T-cell (primary cell): ENCODE measurements at regions of chr15 and their contacts with region 1.

Region 1: DNA sequence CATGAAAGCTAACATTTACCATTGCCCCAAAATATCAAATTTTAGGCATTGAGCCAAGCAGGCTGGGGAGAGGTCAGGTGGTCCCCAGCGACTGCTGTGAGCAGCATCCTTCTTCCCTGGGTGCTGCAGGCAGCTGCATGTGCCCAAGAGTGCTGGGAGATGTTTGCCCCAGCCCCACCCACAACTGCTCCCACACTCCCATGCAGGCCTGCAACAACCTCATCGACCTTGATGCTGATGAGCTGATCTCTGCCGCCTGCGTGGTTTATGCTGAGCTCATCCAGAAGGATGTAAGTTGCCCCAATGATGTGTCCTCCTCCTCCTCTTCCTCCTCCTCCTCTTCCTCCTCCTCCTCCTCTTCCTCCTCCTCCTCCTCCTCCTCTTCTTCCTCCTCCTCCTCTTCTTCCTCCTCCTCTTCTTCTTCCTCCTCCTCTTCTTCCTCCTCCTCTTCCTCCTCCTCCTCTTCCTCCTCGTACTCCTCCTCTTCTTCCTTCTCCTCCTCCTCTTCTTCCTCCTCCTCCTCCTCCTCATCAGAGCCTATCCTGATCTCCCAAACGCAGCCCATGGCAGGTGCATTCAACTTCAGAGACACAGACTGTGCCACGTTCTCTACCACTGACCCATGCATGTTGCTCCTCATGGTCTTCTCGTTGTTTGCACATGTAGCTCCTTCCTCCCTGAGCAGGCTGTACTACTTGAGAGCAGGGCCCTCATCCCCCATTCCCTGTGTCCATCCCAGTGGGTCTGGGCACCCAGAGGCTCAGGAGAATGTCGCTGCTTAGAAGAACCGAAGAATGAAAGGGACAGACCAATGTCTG is 15.1 kb downstream of the TBC1D21 start:
- DNase-seq: no peak
- ATAC-seq: no peak
- H3K4me3 ChIP-seq: no peak overlapping the region
- H3K4me3 Mint-ChIP-seq: no peak overlapping the region
- H3K27ac ChIP-seq: no peak overlapping the region
- H3K27ac Mint-ChIP-seq: no peak overlapping the region
- H3K4me1 ChIP-seq: no peaks in the 10 kb centered on the region
- H3K4me1 Mint-ChIP-seq: no peaks in the 10 kb centered on the region
- H3K27me3 ChIP-seq: peaks cover 0 to 44% of the 10 kb centered on the region in 2 experiments
- H3K27me3 Mint-ChIP-seq: peaks cover 12 to 23% of the 10 kb centered on the region in 2 donors

Region 2: GRCh38 chr15:73838831-73839426 is 49.5 kb before region 1 on chr15:
- CTCF ChIA-PET with region 1: no interaction called
- POLR2A ChIA-PET with region 1: no interaction called
- DNase-seq: no peak
- ATAC-seq: no peak
- H3K4me3 ChIP-seq: no peak overlapping the region
- H3K4me3 Mint-ChIP-seq: no peak overlapping the region
- H3K27ac ChIP-seq: no peak overlapping the region
- H3K27ac Mint-ChIP-seq: no peak overlapping the region
- H3K4me1 ChIP-seq: no peaks in the 10 kb centered on the region
- H3K4me1 Mint-ChIP-seq: no peaks in the 10 kb centered on the region
- H3K27me3 ChIP-seq: peaks cover 0 to 40% of the 10 kb centered on the region in 2 experiments
- H3K27me3 Mint-ChIP-seq: peaks cover 45 to 51% of the 10 kb centered on the region in 2 donors

Region 3: DNA sequence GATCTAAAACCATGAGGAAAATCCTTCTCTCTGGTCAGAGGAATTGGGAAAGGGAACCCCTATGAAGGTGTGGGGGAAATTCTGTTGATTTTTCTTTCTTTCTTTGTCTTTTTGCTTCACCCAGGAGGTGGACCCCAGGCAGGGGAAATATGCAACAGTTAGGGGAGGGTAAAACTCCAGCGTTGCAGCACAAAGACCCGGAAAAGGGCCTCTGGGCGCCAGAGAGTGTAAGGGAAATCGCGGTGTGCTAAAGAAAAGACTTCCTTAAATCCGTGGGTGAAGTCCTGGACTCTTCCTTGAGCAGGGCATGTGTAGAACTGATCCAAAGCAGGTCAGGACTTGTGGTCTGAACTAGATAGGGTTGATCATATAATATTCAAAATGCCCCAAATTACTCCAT is 26.2 kb before region 1 on chr15:
- CTCF ChIA-PET with region 1: no interaction called
- POLR2A ChIA-PET with region 1: interaction called in 1 of 2 experiments, 11 read pairs
- DNase-seq: no peak
- ATAC-seq: no peak
- H3K4me3 ChIP-seq: no peak overlapping the region
- H3K4me3 Mint-ChIP-seq: no peak overlapping the region
- H3K27ac ChIP-seq: no peak overlapping the region
- H3K27ac Mint-ChIP-seq: no peak overlapping the region
- H3K4me1 ChIP-seq: peaks cover 0 to 6% of the 10 kb centered on the region in 2 experiments
- H3K4me1 Mint-ChIP-seq: peaks cover 8 to 14% (median 9%) of the 10 kb centered on the region in 3 donors
- H3K27me3 ChIP-seq: peaks cover 0 to 36% of the 10 kb centered on the region in 2 experiments
- H3K27me3 Mint-ChIP-seq: peaks cover 21 to 36% of the 10 kb centered on the region in 2 donors

Region 4: DNA sequence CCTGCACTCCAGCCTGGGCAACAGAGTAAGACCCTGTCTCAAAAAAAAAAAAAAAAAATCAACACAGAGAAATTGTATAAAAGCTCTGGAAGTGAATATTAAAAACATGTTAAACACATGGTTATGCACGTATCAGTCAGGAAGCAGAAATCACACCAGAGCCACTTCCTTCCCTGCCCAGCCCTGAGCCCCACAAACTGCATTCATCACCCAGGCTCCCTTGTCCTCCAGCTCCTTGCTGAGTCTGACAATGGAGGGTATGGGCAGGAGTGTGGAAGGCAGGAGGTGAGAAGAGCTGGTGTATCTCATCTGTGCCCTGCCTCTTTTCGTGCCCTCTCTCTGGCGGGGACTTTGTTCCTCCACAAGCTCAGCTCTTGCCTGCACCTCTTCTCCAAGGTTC is 25.7 kb after region 1 on chr15:
- CTCF ChIA-PET with region 1: no interaction called
- POLR2A ChIA-PET with region 1: no interaction called
- DNase-seq: no peak
- ATAC-seq: peak in 2 of 4 experiments; percentile 43 to 59
- H3K4me3 ChIP-seq: no peak overlapping the region
- H3K4me3 Mint-ChIP-seq: no peak overlapping the region
- H3K27ac ChIP-seq: no peak overlapping the region
- H3K27ac Mint-ChIP-seq: no peak overlapping the region
- H3K4me1 ChIP-seq: peaks cover 0 to 7% of the 10 kb centered on the region in 2 experiments
- H3K4me1 Mint-ChIP-seq: peaks cover 4 to 19% (median 11%) of the 10 kb centered on the region in 3 donors
- H3K27me3 ChIP-seq: no peaks in the 10 kb centered on the region
- H3K27me3 Mint-ChIP-seq: no peaks in the 10 kb centered on the region